ENCODE measurements at regions of chr2 and their contacts with region 1.

Region 1: DNA sequence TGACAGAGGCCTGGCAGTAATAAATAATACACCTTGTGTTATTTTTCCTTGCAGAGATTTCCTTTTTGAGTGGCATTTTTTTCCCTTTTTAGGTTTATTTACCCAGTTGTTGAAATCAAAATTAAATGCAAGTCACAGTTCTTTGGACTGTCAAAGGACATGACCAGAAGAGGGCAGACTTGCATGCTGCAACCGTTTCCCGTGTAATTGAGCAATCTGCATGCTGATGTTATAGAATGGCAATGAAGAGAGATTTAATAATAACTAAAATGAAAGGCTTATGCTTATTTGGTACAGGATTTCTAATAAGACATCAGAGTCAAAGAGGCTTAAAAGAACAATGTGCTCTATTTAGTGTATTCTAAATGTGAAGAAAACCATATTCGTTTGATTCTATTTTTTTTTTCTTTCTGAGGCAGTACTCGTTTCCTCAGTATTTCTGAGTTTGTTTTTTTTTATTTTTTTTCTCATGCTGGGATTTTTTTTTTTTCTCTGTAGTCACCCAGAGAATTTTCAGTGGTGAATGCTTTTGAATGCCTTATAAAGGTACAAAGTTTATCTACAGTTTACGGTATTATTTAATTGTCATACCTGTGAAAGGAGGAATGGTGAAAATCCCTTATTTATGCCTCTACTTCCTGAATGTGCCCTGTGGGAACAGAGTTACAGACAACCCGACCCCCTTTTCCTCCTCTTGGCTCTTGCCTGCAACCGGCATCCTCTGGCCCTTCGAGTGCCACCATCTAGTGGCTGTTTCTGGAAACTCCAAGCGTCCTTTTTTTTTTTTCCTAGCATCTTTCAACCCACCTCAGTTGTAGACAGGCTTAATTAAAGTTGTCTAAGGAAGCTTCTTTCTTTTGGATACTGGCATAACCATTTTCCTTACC is 368.5 kb downstream of the LRRTM1 start:
- DNase-seq: peak in 1 of 2 donors; percentile 24
- ATAC-seq: peak in 4 of 8 donors; percentile 56 to 75 (median 72)
- H3K4me3 ChIP-seq: peak overlapping the region in 3 of 10 donors; percentile 2 to 33 (median 3)
- H3K27ac ChIP-seq: no peak overlapping the region
- H3K4me1 ChIP-seq: peaks cover 0 to 9% (median 0%) of the 10 kb centered on the region in 9 donors
- H3K27me3 ChIP-seq: peaks cover 0 to 5% (median 0%) of the 10 kb centered on the region in 7 donors
- CTCF ChIP-seq: peak; percentile 23 to 68 (median 59)

Region 2: DNA sequence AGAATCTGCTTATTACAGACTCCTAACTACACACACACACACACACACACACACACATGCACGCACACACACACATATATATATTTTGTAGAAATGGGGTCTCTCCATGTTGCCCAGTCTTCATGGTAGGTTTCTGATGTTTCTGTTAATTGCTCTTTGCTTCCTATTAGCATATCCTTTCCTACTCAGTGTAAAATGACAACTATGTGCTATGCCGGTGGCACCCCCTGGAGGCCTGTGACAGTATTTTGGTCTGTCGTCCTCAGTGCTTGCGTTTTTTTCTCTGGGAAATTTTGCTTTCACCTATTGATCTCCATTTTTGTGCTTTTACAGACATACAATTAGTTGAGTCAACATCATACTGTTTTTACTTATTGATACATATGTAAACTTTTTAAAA is 46.4 kb after region 1 on chr2:
- intact Hi-C with region 1: loop called in 2 of 10 experiments (anchors 5 kb)
- DNase-seq: peak in 1 of 2 donors; percentile 13
- ATAC-seq: no peak
- H3K4me3 ChIP-seq: no peak overlapping the region
- H3K27ac ChIP-seq: no peak overlapping the region
- H3K4me1 ChIP-seq: no peaks in the 10 kb centered on the region
- H3K27me3 ChIP-seq: no peaks in the 10 kb centered on the region
- CTCF ChIP-seq: peak in 5 of 9 donors; percentile 6 to 32 (median 20)